Activated B cell treated with CpG ODN at 0.5 μM for 24 hours (primary cell): ENCODE measurements at regions of chr18 and their contacts with region 1.

Region 1: DNA sequence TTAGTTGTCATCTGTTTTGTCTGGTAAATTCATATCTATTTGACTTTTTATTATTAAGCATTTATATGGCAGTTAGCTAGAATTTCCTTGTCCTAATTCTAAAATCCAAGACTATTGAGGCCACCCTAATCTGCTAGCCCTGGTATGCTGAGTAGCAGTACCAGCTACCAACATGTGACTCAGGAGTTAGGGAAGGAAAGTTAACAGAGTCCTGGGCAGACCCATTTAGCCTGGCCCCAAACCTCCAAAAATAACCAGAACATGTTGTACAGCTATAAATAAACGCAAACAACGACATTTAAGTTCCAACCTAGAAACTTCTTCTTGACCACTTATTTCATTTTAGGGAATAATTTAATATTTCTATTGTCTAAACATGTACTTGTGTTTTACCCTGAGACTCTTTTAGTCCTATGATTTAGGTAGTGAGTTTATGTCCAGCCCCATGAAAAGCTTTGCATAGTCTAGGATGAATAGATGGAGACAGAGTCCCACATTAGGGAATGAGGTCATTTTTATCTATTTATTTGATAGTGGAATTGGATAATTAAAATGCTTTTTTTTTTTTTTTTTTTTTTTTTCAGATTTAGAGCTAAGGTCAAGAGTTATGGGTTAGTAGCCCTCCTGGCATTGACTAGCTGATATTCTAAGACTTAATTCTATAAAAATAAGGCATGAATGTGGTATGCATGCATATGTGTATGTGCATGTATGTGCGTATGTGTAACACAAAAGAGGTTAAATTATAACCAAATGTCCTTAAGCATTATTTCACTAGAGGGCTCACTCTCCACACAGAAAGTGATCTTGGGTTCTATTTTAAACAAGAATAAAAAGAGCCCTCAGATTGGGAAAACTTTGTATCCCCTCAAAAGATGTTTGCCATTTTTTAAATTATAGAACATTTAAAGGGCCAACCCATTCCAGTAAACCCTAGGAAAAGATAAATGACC is 160.1 kb upstream of the MAPRE2 start:
- DNase-seq: no peak
- ATAC-seq: no peak
- H3K4me3 Mint-ChIP-seq: no peak overlapping the region
- H3K27ac Mint-ChIP-seq: no peak overlapping the region
- H3K4me1 Mint-ChIP-seq: no peaks in the 10 kb centered on the region
- H3K27me3 Mint-ChIP-seq: peaks cover 3% of the 10 kb centered on the region
- CTCF ChIP-seq: no peak

Region 2: GRCh38 chr18:34224423-34225217 is 656.5 kb before region 1 on chr18 and contains the start of gene NOL4:
- CTCF ChIA-PET with region 1: no interaction called
- POLR2A ChIA-PET with region 1: no interaction called
- intact Hi-C with region 1: no loop called
- DNase-seq: no peak
- ATAC-seq: no peak
- H3K4me3 Mint-ChIP-seq: no peak within 1 kb of the TSS
- H3K27ac Mint-ChIP-seq: no peak within 1 kb of the TSS
- H3K4me1 Mint-ChIP-seq: peaks cover 7% of the 10 kb centered on the region
- H3K27me3 Mint-ChIP-seq: peaks cover 44% of the 10 kb centered on the region
- CTCF ChIP-seq: no peak
- total RNA-seq, gene NOL4: not detected in 2 replicates

Region 3: GRCh38 chr18:34821749-34822148 is 59.4 kb before region 1 on chr18:
- CTCF ChIA-PET with region 1: no interaction called
- POLR2A ChIA-PET with region 1: no interaction called
- intact Hi-C with region 1: loop called (anchors 10 kb)
- DNase-seq: no peak
- ATAC-seq: no peak
- H3K4me3 Mint-ChIP-seq: no peak overlapping the region
- H3K27ac Mint-ChIP-seq: no peak overlapping the region
- H3K4me1 Mint-ChIP-seq: no peaks in the 10 kb centered on the region
- H3K27me3 Mint-ChIP-seq: no peaks in the 10 kb centered on the region
- CTCF ChIP-seq: no peak